ENCODE measurements at regions of chr3 and their contacts with region 1.

Region 1: DNA sequence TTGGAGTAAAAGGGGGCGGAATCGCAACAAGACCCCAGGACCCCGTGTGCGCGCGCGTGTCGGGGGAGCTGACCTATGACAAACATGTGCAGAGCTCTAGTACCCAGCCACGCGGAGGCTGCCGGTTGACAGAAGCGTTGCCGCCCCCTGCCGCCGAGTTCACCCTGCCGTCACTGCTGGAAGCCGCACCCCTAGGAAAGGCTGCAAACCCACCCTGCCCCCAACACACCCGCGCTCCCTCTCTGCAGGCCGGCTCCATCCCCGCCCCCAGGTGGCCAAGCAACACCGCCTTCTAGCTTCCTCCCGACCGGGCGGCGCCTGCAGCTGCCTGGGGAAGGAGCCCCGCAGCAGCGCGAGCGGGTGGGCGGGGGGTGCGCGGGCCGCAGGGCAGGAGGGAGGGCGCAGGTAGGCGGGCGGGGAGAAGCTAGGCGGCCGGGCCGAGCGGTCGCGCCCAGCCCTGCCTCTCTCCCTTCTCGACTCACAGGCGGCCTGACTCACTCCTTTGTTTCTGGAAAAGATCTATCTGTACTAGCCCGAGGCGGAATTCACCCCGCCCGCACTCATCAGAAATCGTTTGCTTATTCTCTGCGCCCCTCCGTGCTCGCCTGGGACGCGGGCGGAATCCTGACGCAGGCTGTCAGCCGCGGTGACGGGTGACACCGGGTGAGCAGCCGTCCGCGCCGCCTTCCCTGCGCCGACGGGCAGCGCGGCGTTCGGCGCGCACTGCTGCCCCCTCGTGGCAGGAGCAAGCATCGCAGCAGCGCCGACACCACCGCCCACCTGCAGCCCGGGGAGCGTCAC is 160.8 kb downstream of the GAP43 start:
- DNase-seq: peak; percentile 83
- ATAC-seq: peak; percentile 85
- H3K4me3 ChIP-seq: peak overlapping the region; percentile 44 to 61
- H3K27ac ChIP-seq: peak overlapping the region; percentile 56
- H3K4me1 ChIP-seq: peaks cover 13 to 32% of the 10 kb centered on the region in 2 experiments
- H3K27me3 ChIP-seq: no peaks in the 10 kb centered on the region
- CTCF ChIP-seq: peak; percentile 71 to 97 (median 94)
- POLR2A ChIP-seq: no peak
- RAD21 ChIP-seq: peak; percentile 81

Region 2: GRCh38 chr3:114839476-114839875 is 944.7 kb before region 1 on chr3:
- CTCF ChIA-PET with region 1: no interaction called
- POLR2A ChIA-PET with region 1: no interaction called
- RAD21 ChIA-PET with region 1: no interaction called
- intact Hi-C with region 1: loop called (anchors 10 kb)
- DNase-seq: no peak
- ATAC-seq: no peak
- H3K4me3 ChIP-seq: no peak overlapping the region
- H3K27ac ChIP-seq: no peak overlapping the region
- H3K4me1 ChIP-seq: peaks cover 0 to 10% of the 10 kb centered on the region in 2 experiments; a peak in 2 of 4 replicates
- H3K27me3 ChIP-seq: no peaks in the 10 kb centered on the region
- CTCF ChIP-seq: no peak
- POLR2A ChIP-seq: no peak
- RAD21 ChIP-seq: no peak

Region 3: DNA sequence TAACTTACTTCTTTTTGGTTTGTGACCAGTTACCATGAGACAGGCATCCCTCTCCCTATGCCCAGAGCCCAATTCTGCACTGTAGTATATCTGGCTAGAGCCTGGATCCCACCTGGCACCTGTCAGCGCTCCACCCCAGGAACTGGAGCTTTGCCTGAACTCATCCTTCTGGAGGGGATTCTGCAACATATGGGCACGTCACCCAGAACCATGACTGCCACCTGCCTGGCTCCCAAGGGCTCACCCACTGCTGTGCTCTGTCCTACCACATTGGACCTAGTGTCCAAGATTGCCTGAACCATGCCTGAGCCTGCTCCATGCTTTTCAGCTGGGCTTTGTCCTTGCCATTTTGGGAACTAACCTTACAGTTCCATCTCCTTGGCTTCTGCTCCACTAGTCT is 181.9 kb before region 1 on chr3:
- CTCF ChIA-PET with region 1: no interaction called
- POLR2A ChIA-PET with region 1: no interaction called
- RAD21 ChIA-PET with region 1: no interaction called
- intact Hi-C with region 1: no loop called
- DNase-seq: no peak
- ATAC-seq: no peak
- H3K4me3 ChIP-seq: no peak overlapping the region
- H3K27ac ChIP-seq: no peak overlapping the region
- H3K4me1 ChIP-seq: no peaks in the 10 kb centered on the region
- H3K27me3 ChIP-seq: no peaks in the 10 kb centered on the region
- CTCF ChIP-seq: no peak
- POLR2A ChIP-seq: no peak
- RAD21 ChIP-seq: no peak

Region 4: GRCh38 chr3:115692887-115693524 is 91.1 kb before region 1 on chr3:
- CTCF ChIA-PET with region 1: interaction called, 10 read pairs
- POLR2A ChIA-PET with region 1: no interaction called
- RAD21 ChIA-PET with region 1: interaction called, 3 to 4 read pairs
- intact Hi-C with region 1: loop called (anchors 10 kb)
- DNase-seq: peak; percentile 68
- ATAC-seq: peak; percentile 96
- H3K4me3 ChIP-seq: no peak overlapping the region
- H3K27ac ChIP-seq: no peak overlapping the region
- H3K4me1 ChIP-seq: peaks cover 0 to 11% of the 10 kb centered on the region in 2 experiments; a peak in 2 of 4 replicates
- H3K27me3 ChIP-seq: no peaks in the 10 kb centered on the region
- CTCF ChIP-seq: peak; percentile 74 to 95 (median 86)
- POLR2A ChIP-seq: no peak
- RAD21 ChIP-seq: peak; percentile 96

Region 5: GRCh38 chr3:115814778-115815380 is 30.7 kb after region 1 on chr3:
- CTCF ChIA-PET with region 1: interaction called, 7 read pairs
- POLR2A ChIA-PET with region 1: interaction called, 3 read pairs
- RAD21 ChIA-PET with region 1: no interaction called
- intact Hi-C with region 1: loop called (anchors 2 kb)
- DNase-seq: peak; percentile 59
- ATAC-seq: peak; percentile 93
- H3K4me3 ChIP-seq: no peak overlapping the region
- H3K27ac ChIP-seq: no peak overlapping the region
- H3K4me1 ChIP-seq: no peaks in the 10 kb centered on the region
- H3K27me3 ChIP-seq: no peaks in the 10 kb centered on the region
- CTCF ChIP-seq: peak; percentile 71 to 94 (median 81); a peak in 5 of 6 replicates
- POLR2A ChIP-seq: no peak
- RAD21 ChIP-seq: peak; percentile 94